ENCODE measurements at regions of chr20 and their contacts with region 1.

Region 1: GRCh38 chr20:32509639-32510066 is 75.5 kb downstream of the NOL4L start:
- DNase-seq: peak; percentile 35 to 90 (median 80)
- ATAC-seq: peak; percentile 75 to 84
- H3K4me3 Mint-ChIP-seq: peak overlapping the region; percentile 77 to 94 (median 87)
- H3K27ac Mint-ChIP-seq: peak overlapping the region; percentile 94 to 98 (median 97)
- H3K4me1 Mint-ChIP-seq: peaks cover 45 to 94% (median 86%) of the 10 kb centered on the region in 4 donors
- H3K27me3 Mint-ChIP-seq: no peaks in the 10 kb centered on the region

Region 2: DNA sequence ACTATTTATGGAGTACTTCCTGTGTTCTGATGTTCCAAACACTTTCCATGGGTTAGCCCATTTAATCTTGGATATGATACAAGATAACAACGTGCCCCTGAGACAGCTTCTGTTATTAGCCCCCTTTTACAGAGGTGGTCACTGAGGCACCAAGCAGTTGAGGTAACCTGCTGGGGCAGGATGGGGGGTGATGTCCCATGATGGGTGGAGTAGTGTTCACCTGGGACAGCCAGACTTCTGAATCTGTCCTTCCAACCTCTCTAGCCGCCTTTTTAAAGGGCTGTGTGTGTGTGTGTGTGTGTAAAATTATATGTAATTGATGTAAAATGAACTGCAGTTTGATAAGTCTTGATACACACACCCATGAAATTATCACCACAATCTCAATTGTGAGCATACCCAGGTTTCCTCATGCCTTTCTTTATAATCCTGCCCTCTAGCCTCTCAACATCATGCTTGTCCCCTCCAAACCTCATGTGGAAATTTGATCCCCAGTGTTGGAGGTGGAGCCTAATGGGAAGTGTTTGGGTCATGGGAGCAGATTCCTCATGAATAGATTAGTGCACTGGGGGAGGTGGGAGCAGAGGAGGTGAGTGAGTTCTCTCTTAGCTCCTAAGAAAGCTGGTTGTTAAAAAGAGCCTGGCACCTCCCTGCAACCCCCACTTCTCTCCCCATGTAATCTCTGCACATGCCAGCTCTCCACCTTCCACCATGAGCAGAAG is 341.3 kb before region 1 on chr20:
- POLR2A ChIA-PET with region 1: no interaction called
- DNase-seq: no peak
- ATAC-seq: no peak
- H3K4me3 Mint-ChIP-seq: no peak overlapping the region
- H3K27ac Mint-ChIP-seq: peak overlapping the region in 5 of 10 donors; percentile 7 to 84 (median 52)
- H3K4me1 Mint-ChIP-seq: peaks cover 0 to 2% (median 0%) of the 10 kb centered on the region in 4 donors
- H3K27me3 Mint-ChIP-seq: no peaks in the 10 kb centered on the region

Region 3: GRCh38 chr20:32249030-32249738 is 260.5 kb before region 1 on chr20:
- POLR2A ChIA-PET with region 1: no interaction called
- DNase-seq: peak in 9 of 10 donors; percentile 12 to 89 (median 65)
- ATAC-seq: peak; percentile 88 to 97
- H3K4me3 Mint-ChIP-seq: peak overlapping the region; percentile 11 to 75 (median 51)
- H3K27ac Mint-ChIP-seq: peak overlapping the region in 9 of 10 donors; percentile 53 to 97 (median 89)
- H3K4me1 Mint-ChIP-seq: peaks cover 11 to 39% (median 28%) of the 10 kb centered on the region in 4 donors
- H3K27me3 Mint-ChIP-seq: no peaks in the 10 kb centered on the region

Region 4: DNA sequence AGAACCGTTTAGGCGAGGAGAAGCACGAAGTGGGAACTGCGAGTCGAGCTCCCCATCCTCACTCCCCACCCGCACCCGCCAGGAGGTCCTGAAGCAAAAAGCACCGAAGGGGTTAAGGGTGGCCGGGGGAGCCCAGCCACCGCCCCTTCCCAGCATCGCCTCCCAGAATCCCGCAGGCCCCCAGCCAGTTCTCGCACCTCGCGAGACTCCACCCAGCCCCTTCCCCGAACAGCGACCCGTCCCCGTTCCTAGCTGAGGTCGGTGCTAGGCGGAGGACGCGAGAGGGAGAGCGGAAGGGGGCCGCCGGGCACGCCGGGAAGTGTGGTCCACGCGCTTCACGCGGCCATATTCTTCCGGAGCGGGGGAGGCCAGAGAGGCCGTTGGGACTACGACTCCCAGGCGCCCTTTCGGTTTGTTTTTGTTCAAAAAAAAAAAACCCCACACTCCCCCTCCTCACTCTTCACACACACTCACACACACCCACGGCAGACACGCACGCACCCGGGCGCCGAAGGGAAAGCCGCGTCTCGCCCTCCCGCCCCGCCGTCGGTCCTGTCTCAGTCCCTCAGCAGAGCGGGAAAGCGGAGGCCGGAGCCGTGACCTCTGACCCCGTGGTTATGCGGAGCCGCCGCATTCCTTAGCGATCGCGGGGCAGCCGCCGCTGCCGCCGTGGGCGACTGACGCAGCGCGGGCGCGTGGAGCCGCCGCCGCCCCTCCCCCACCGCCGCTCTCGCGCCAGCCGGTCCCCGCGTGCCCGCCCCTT is 151.6 kb before region 1 on chr20 and contains the start of gene ASXL1:
- POLR2A ChIA-PET with region 1: interaction called, 34 read pairs
- DNase-seq: peak; percentile 86 to 95 (median 92)
- ATAC-seq: peak; percentile 91 to 92
- H3K4me3 Mint-ChIP-seq: peak within 1 kb of the TSS; percentile 87 to 98 (median 96)
- H3K27ac Mint-ChIP-seq: peak within 1 kb of the TSS; percentile 94 to 100 (median 99)
- H3K4me1 Mint-ChIP-seq: peaks cover 16 to 53% (median 46%) of the 10 kb centered on the region in 4 donors
- H3K27me3 Mint-ChIP-seq: no peaks in the 10 kb centered on the region
- polyA plus RNA-seq, gene ASXL1: 15.2 to 20.1 (median 18.4) TPM

Region 5: DNA sequence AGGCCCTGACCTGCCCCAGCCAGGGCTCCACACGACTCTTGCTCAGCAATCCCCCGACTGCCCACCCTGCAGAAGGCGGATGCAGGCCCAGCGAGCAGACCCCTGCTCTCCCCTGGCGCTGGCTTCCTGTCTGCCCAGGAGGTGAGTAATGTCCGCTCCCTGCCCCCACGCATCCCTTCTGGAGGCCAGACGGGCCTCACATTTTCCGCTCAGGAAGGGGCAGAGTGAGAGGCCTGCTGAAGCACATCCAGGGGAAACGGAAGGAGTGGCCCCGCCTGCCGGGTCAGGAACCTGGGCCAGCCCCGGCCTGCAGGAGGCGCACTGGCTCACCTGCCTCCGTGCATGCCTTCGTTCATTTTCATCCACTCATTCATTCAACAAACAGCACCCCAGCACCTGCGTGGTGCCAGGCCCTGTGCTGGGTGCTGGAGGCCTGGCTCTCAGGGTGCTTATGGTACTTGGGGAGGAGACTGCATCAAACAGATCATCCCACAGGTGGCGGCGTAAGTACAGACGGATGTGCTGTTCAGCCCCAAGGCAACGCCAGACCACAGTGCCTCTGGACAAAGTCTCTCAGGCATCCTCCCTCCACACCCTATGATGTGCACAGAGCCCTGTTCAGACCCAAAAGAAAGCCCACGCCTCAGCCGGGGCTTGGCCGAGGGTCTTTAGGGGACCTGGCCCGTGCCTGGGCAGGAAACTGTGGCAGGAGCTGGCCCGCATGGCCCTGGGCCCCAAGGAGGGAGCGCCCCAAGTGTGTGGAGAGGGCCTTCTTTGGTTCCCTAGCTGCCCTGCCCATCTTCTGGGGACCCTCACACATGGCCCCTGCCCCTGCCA is 39.4 kb before region 1 on chr20:
- POLR2A ChIA-PET with region 1: interaction called, 17 read pairs
- DNase-seq: no peak
- ATAC-seq: peak; percentile 64 to 73
- H3K4me3 Mint-ChIP-seq: peak overlapping the region in 1 of 10 donors; percentile 59
- H3K27ac Mint-ChIP-seq: peak overlapping the region; percentile 66 to 90 (median 76)
- H3K4me1 Mint-ChIP-seq: peaks cover 8 to 32% (median 13%) of the 10 kb centered on the region in 4 donors
- H3K27me3 Mint-ChIP-seq: no peaks in the 10 kb centered on the region

Region 6: GRCh38 chr20:32484958-32485769 is 24.5 kb before region 1 on chr20:
- POLR2A ChIA-PET with region 1: interaction called, 105 read pairs
- DNase-seq: peak; percentile 64 to 93 (median 85)
- ATAC-seq: peak; percentile 72 to 85
- H3K4me3 Mint-ChIP-seq: peak overlapping the region; percentile 87 to 98 (median 95)
- H3K27ac Mint-ChIP-seq: peak overlapping the region; percentile 88 to 98 (median 95)
- H3K4me1 Mint-ChIP-seq: peaks cover 33 to 54% (median 48%) of the 10 kb centered on the region in 4 donors
- H3K27me3 Mint-ChIP-seq: peaks cover 0 to 2% (median 0%) of the 10 kb centered on the region in 5 donors

Region 7: DNA sequence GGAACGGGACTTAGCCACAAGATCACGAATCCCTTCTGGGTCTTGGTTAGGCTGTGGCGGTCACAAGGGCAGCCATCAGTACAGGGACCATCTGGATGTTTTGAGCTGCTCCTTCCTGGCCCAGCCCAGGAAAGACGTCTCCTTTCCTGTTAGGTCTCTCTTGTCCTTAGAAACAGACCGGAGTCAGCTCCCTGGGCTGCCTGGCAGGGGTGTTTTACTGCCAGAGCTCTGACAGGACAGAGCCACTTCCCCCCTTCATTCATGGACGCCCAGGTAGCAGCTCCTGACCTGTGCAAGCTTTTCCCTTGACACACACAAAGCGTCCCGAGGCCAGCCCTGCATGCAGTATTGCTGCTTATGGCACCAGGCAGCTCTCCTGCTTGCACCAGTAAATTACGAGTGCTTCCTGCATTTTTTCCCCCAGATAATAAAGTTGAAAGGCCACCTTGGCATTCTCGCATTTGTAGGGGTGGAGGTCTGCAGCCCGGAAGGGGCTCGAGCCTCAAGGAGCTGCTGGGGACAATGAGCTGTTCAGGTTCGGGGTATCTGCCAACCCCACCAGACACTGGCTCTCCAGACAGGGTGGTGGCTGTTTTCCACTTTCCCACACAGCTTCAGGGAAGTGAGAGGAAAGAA is 11.9 kb before region 1 on chr20:
- POLR2A ChIA-PET with region 1: interaction called, 45 read pairs
- DNase-seq: peak in 1 of 10 donors; percentile 45
- ATAC-seq: no peak
- H3K4me3 Mint-ChIP-seq: no peak overlapping the region
- H3K27ac Mint-ChIP-seq: peak overlapping the region; percentile 14 to 85 (median 78)
- H3K4me1 Mint-ChIP-seq: peaks cover 16 to 65% (median 50%) of the 10 kb centered on the region in 4 donors
- H3K27me3 Mint-ChIP-seq: no peaks in the 10 kb centered on the region